GM13976 (cell line): ENCODE measurements at regions of chr19 and their contacts with region 1.

Region 1: GRCh38 chr19:55624109-55625003 is at the start of gene ZNF784:
- DNase-seq: peak; percentile 95
- CTCF ChIP-seq: no peak

Region 2: GRCh38 chr19:55516878-55517620 is 107.3 kb before region 1 on chr19:
- in situ Hi-C with region 1: loop called (anchors 5 kb)
- DNase-seq: peak; percentile 100
- CTCF ChIP-seq: peak; percentile 94

Region 3: DNA sequence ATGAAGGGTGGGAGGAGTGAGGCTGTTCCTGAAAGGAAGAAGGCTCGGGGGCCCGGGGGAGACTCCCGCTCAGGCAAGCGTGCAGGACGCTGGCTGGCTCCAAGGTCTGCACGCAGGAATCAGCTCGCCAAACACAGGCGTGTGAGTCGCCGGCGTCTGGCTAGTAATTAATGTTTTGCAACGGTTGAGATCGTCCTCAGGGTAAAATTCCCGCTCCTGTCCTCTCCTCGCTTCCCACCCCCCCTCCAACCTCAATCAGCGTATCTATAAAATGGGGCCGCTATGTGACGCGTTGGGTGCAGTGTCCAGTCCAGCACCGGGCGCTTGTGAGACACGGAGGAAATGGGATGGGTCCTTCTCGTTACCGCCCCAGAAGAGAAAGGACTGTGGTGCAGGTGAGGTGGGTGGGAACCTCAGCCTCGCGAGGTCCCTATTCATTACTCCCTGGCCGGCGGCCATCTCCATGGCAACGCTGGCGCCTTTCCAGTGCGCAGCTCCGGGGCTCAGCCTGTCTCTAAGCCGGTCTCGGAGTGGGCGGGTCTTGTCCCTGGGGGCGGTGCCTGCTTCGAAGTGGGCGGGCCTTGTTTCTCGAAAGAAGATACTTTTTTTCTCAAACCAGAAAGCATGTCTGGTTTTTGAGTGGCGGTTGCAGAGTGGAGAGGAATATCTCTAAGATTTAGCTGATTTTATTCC is 37.2 kb before region 1 on chr19:
- in situ Hi-C with region 1: no loop called
- DNase-seq: peak; percentile 98
- CTCF ChIP-seq: no peak